Right ventricle myocardium superior (tissue), 1 donor: ENCODE measurements at regions of chr4 and their contacts with region 1.

Region 1: GRCh38 chr4:42656944-42657792 is at the start of gene ATP8A1:
- DNase-seq: peak; percentile 96
- ATAC-seq: peak; percentile 97
- total RNA-seq, gene ATP8A1: 19.3 TPM

Region 2: GRCh38 chr4:42610941-42611340 is 46.2 kb before region 1 on chr4:
- intact Hi-C with region 1: loop called (anchors 5 kb)
- DNase-seq: no peak
- ATAC-seq: peak; percentile 88

Region 3: DNA sequence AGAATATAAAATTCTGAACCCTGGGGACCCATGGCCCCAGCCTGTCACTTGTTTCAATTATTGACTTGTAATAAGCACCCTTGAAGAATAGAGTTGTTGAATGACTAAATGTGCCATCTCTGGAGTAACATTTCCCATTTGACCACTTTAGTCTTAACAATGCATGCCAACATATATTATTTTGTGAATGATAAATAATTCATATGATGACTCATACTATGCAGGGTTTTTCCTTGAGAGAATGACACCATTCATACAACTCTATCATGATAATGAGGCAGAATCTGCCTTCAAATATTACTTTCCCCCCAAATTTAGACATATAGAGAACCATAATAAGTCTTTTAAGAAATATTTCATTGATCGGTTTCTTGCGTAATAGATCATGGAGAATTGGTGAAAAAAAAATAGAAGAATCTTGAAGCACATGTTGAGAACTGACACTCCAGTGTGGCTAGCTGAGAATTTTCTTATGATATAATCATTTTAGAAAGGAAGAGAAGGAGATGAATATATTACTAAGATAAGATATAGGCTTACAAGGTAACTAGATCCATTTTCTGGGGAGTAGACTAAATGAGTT is 639.9 kb after region 1 on chr4:
- intact Hi-C with region 1: no loop called
- DNase-seq: no peak
- ATAC-seq: no peak